ENCODE measurements at regions of chr2 and their contacts with region 1.

Region 1: DNA sequence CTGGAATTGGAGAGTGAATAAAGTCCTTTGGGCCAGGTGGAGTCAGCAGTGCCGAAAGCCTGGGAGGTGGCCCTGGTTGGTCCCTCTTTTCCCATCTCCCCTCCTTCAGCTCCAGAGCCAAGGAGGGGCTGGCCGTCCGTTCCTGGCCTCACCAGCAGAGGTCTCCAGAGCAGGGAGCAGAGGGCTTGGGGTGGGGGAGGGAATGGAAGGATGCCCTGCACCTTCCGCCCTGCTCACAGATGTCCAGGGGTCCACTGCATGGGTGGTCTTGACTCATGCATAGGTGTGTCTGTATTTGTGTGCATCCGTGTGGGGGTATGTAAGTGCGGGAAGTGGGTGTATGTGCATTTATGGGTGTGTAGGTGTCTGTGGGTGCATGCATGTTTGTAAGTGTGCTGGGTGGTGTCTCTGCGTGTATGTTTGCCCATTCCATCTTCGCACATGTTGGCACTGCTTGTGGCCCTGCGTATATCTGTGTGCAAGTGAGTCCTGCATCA is 201.8 kb downstream of the ZFP36L2 start:
- DNase-seq: peak; percentile 81
- ATAC-seq: peak; percentile 47

Region 2: DNA sequence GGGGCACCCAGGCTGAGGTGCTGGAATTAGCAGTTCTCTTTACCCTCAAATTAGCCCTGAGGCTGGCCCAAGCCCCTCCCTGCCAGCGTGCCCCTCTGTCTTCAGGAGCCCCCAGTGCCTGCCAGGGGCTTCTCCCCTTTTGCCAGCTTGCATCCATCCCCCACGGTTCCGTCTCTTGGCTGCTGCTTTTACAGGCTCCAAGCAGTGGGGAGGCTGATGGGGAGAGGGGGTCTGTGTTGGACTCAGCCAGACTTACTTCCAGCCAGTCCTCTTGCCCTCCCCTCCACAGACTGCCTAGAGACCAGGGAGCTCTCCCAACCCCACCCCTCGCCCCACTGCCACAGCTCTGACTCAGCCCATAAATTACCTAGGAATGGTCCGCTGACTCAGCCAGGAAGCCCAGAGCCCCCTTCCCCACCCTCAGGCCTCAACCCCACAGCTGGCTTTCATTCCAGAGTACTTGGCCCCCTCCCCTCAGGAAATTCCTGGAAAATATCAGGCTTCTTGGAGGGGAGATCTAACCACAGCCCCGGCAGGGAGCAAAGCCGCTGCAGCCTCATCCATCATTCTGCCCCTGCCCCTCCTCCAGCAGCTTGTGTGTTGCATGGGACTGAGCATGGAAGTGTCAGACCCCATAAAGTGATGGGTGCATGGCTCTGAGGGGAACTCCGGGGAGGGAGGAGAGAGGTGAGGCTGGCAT is 17.2 kb after region 1 on chr2:
- intact Hi-C with region 1: no loop called
- DNase-seq: peak; percentile 33
- ATAC-seq: no peak

Region 3: GRCh38 chr2:43073368-43073767 is 48.8 kb after region 1 on chr2:
- intact Hi-C with region 1: loop called (anchors 5 kb)
- DNase-seq: no peak
- ATAC-seq: peak; percentile 62

Region 4: DNA sequence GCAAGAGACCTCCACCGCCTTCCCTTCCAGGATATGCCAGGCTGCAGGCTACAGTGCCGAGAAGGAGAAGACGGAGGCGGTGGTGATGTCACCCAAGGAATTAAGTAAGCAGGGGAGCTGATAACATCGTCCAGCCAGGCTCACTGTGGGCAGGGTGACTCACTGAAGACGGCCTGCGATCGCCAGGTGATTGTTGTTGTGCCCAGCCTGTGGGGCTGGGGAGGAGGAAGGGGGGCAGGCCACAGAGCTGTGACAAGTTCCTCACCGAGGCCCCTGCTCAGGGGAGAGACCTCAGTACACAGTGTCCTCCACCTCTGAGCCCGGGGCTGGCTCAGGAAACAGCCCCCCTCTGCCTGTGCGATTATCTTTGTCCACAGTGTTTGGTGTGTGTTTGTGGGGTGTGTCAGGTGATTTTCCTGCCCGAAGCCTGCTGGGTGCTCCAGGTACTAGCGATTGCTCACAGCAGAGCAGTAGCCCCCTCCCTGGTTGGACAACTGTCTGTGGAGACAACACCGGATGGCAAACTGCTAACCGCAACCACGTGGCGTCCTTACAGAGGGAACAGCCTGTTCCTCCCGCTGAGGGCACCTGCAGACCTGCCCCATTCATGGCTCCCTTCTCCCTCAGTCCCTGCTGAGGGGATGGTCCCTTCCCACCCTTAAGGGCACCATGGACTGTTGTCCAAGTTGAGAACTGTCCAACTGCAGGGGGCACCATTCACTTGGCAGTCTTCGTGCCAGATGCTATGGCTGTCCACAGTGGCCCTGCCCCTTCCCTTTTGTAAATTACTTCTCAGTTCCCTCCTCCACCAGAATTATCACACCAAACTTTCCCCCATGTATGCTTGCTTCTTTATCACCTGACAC is 106.7 kb after region 1 on chr2:
- intact Hi-C with region 1: loop called (anchors 5 kb)
- DNase-seq: peak; percentile 90
- ATAC-seq: peak; percentile 58